A549 (cell line): ENCODE measurements at regions of chr16 and their contacts with region 1.

Region 1: GRCh38 chr16:1194665-1195392 is 30.2 kb downstream of the TPSG1 start:
- DNase-seq: no peak
- ATAC-seq: peak; percentile 21 to 65; a peak in 3 of 6 replicates
- H3K4me3 ChIP-seq: no peak overlapping the region
- H3K27ac ChIP-seq: peak overlapping the region in 1 of 2 experiments; percentile 57; a peak in 3 of 6 replicates
- H3K4me1 ChIP-seq: peaks cover 27% of the 10 kb centered on the region
- CTCF ChIP-seq: peak; percentile 89
- EP300 ChIP-seq: no peak
- POLR2A ChIP-seq: no peak
- RAD21 ChIP-seq: peak; percentile 83 to 95

Region 2: GRCh38 chr16:1146409-1146808 is 48.4 kb before region 1 on chr16:
- CTCF ChIA-PET with region 1: interaction called, 33 read pairs
- POLR2A ChIA-PET with region 1: no interaction called
- DNase-seq: peak in 1 of 2 experiments; percentile 31
- ATAC-seq: no peak; a peak in 1 of 6 replicates
- H3K4me3 ChIP-seq: no peak overlapping the region
- H3K27ac ChIP-seq: no peak overlapping the region
- H3K4me1 ChIP-seq: peaks cover 5% of the 10 kb centered on the region; the same call in 1 of the 3 replicates
- CTCF ChIP-seq: no peak
- EP300 ChIP-seq: no peak
- POLR2A ChIP-seq: no peak
- RAD21 ChIP-seq: no peak

Region 3: GRCh38 chr16:1169285-1170075 is 25.3 kb before region 1 on chr16:
- CTCF ChIA-PET with region 1: interaction called, 11 read pairs
- POLR2A ChIA-PET with region 1: no interaction called
- DNase-seq: no peak
- ATAC-seq: no peak
- H3K4me3 ChIP-seq: no peak overlapping the region
- H3K27ac ChIP-seq: no peak overlapping the region
- H3K4me1 ChIP-seq: peaks cover 16% of the 10 kb centered on the region
- CTCF ChIP-seq: no peak
- EP300 ChIP-seq: no peak
- POLR2A ChIP-seq: no peak
- RAD21 ChIP-seq: no peak

Region 4: DNA sequence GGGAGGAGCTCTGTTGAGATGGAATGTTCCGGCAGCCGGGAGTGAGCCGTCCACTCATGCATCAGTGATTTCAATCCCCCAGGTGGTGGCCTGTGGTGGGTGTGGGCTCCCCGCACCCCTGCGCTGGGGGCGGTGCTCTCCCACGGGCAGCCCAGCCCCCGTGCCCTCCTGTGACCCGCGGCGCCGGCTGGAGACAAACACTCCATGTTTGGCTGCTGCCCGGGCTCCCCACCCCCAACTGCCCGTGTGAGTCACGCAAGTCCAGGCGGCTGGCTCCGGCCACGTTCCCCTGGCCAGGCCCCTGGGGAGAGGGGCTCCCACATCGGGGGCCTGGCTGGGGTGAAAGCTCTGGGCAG is 12.5 kb before region 1 on chr16:
- CTCF ChIA-PET with region 1: interaction called, 53 read pairs
- POLR2A ChIA-PET with region 1: no interaction called
- DNase-seq: peak; percentile 57 to 83
- ATAC-seq: peak; percentile 58 to 79
- H3K4me3 ChIP-seq: peak overlapping the region; percentile 36; the same call in 2 of the 3 replicates
- H3K27ac ChIP-seq: peak overlapping the region; percentile 97 to 100
- H3K4me1 ChIP-seq: peaks cover 49% of the 10 kb centered on the region
- CTCF ChIP-seq: no peak
- EP300 ChIP-seq: peak; percentile 13 to 33; a peak in 2 of 5 replicates
- POLR2A ChIP-seq: no peak
- RAD21 ChIP-seq: peak in 1 of 2 experiments; percentile 21; a peak in 1 of 5 replicates

Region 5: GRCh38 chr16:1330260-1330914 is 135.6 kb after region 1 on chr16:
- CTCF ChIA-PET with region 1: no interaction called
- POLR2A ChIA-PET with region 1: no interaction called
- DNase-seq: peak in 1 of 2 experiments; percentile 42
- ATAC-seq: peak in 1 of 2 experiments; percentile 42; a peak in 3 of 6 replicates
- H3K4me3 ChIP-seq: no peak overlapping the region
- H3K27ac ChIP-seq: no peak overlapping the region
- H3K4me1 ChIP-seq: peaks cover 29% of the 10 kb centered on the region
- CTCF ChIP-seq: peak; percentile 30; the same call in 2 of the 3 replicates
- EP300 ChIP-seq: no peak
- POLR2A ChIP-seq: no peak
- RAD21 ChIP-seq: no peak